ENCODE measurements at regions of chr18 and their contacts with region 1.

Region 1: DNA sequence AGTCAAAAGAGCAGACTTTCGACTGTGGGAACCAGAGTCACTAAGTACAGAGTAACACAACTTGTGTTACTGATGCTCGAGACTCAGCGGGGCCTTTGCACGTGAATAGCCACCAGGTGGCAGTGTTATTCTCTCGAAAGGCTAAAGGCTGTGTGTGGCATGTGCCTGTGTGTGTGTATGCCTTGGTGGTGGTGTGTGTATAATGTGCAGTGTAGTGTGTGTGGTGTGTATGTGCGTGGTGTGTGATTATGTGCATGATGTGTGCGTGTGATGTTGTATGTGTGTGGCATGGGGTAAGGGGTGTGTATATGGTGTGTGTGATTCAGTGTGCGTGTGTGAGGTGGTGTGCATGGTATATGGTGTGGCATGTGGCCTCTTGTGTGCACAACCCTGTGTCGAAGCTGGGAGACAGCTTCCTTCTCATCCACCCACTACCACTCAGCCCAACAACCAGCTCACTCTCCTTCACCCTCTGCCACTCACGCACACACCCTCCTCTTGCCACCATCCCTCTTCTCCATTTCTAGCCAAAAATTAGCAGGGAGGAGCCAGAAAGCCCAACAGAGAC is 83.0 kb upstream of the ZNF532 start:
- DNase-seq: peak; percentile 89

Region 2: DNA sequence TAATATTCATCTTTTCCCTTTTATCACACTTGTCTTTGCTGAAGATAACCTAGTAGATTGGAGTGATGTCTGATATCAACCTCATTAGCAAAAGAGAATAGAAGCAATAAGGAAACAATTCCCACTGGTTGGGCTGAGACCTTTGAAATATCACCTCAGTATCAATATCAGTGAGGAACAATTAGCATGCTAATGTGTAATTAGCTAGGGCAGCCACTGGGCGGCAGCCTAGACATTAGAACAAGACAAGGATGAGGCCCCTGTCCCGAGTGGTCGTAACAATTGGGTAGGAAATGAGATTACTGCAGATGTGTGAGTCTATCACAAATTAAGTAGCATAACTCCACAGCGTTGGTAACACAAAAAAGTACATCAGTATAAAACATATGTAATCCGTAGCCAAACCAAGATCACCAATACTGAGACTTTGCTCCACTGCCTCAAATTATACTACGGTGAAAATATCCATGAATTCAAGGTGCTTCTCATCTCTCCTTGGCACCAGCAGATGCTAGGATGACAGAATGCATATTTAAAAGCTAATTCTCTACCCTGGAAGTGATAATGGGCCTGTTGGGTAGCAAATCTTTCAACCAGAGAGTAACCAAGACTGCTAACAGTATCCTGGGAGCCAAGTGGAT is 251.9 kb before region 1 on chr18:
- in situ Hi-C with region 1: loop called (anchors 25 kb)
- DNase-seq: peak; percentile 12

Region 3: DNA sequence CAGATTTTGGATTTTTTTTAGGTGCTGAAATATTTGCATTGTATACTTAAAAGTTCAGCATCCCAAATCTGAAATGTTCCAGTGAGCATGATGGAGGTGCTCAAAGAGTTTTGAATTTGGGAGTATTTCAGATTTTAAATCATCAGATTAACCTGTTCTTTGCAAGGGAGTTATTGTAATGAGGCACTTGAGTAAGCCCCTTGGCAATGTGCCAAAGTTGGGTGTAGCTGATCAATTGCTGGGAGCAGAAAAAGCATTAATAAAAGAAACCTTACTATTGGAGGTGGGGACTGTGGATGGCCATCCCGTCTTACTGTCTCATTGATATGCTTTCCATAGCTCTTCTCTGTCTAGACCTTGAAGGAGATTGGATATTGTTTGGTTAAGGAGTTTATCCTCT is 82.2 kb before region 1 on chr18:
- in situ Hi-C with region 1: no loop called
- DNase-seq: no peak

Region 4: DNA sequence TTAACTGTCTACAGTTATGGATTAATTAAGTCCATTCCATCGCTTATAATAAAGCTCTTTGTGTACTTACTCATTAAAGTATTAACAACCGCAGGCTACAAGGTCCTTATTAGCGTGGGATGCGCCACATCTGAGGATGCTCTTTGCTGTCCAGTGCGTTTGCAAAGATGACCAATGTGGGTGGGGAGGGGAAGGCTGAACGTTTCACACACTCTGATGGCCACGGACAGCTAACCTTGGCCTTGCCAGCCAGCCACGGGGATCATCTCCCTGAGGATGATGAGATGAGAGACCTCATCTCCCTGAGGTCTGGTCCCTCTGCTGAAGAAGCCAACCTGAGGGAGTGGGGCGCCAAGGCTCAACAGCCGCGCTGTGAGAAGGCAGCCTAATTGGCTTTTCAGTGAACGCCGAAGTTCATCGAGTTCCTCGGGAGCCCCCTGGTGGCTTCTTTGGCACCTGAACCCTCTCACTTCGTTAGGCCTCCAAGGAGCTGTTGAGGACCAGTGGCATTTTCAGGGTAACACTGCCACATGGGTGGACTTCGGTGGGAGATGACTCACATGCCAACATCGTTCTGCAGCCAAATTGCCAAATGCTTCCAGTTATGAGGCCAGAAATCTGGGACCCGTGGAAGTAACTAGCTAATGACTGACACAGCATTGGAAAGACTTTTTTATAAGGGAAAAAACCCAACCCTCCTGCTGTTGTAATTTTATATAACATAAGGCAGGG is 288.6 kb after region 1 on chr18:
- in situ Hi-C with region 1: loop called (anchors 25 kb)
- DNase-seq: peak; percentile 94

Measured in G401 (cell line).